WTC11 (cell line): ENCODE measurements at regions of chr7 and their contacts with region 1.

Region 1: GRCh38 chr7:47301105-47301477 is 280.8 kb downstream of the TNS3 start:
- DNase-seq: peak; percentile 62
- ATAC-seq: peak; percentile 79
- H3K4me3 Mint-ChIP-seq: no peak overlapping the region
- H3K27ac Mint-ChIP-seq: no peak overlapping the region
- H3K4me1 Mint-ChIP-seq: peaks cover 12% of the 10 kb centered on the region
- H3K27me3 Mint-ChIP-seq: no peaks in the 10 kb centered on the region
- CTCF ChIP-seq: no peak

Region 2: GRCh38 chr7:47179812-47180515 is 121.1 kb before region 1 on chr7:
- CTCF ChIA-PET with region 1: no interaction called
- POLR2A ChIA-PET with region 1: no interaction called
- DNase-seq: peak; percentile 59
- ATAC-seq: peak; percentile 88
- H3K4me3 Mint-ChIP-seq: no peak overlapping the region
- H3K27ac Mint-ChIP-seq: no peak overlapping the region
- H3K4me1 Mint-ChIP-seq: peaks cover 6% of the 10 kb centered on the region
- H3K27me3 Mint-ChIP-seq: peaks cover 8% of the 10 kb centered on the region
- CTCF ChIP-seq: peak; percentile 61

Region 3: GRCh38 chr7:47354831-47355541 is 53.9 kb after region 1 on chr7:
- CTCF ChIA-PET with region 1: interaction called, 16 read pairs
- POLR2A ChIA-PET with region 1: no interaction called
- DNase-seq: peak; percentile 8
- ATAC-seq: no peak
- H3K4me3 Mint-ChIP-seq: no peak overlapping the region
- H3K27ac Mint-ChIP-seq: no peak overlapping the region
- H3K4me1 Mint-ChIP-seq: peaks cover 7% of the 10 kb centered on the region
- H3K27me3 Mint-ChIP-seq: no peaks in the 10 kb centered on the region
- CTCF ChIP-seq: no peak

Region 4: DNA sequence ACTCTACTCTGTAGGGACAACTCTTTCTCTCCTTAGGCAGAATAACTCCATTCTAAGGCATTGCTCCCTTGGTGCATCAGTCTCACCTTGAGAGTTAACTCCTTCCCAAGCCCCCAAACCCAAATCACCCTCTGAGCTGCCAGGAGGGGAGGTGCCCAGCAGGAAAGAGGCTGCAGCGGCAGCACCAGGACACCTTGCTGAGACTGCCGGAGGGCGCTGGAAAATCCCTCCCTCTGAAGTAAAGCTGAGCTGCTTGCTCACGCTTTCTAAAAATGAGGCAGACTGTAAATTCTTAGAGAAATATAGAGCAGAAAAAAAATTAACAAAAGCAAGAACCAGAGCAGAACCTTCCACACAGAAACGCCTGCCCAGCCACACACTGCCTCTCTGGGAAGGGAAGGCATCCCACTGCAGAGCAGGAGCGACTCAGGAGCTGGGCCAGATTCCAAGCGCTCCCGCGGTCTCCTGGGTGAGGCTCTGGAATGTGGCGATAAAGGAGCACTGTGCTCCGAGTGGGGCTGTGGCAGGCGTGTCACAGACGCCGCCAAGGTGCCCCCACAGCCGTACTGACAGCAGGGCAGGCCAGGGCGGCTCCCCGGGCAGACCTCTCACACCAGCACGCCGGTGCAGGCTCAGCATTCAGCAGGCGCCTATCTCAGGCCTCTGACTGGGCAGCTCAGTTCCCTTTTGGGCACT is 78.7 kb after region 1 on chr7:
- CTCF ChIA-PET with region 1: interaction called, 13 read pairs
- POLR2A ChIA-PET with region 1: no interaction called
- DNase-seq: peak; percentile 39
- ATAC-seq: peak; percentile 57
- H3K4me3 Mint-ChIP-seq: no peak overlapping the region
- H3K27ac Mint-ChIP-seq: peak overlapping the region; percentile 88
- H3K4me1 Mint-ChIP-seq: peaks cover 42% of the 10 kb centered on the region
- H3K27me3 Mint-ChIP-seq: no peaks in the 10 kb centered on the region
- CTCF ChIP-seq: no peak